PC-3 (cell line): ENCODE measurements at regions of chr17 and their contacts with region 1.

Region 1: DNA sequence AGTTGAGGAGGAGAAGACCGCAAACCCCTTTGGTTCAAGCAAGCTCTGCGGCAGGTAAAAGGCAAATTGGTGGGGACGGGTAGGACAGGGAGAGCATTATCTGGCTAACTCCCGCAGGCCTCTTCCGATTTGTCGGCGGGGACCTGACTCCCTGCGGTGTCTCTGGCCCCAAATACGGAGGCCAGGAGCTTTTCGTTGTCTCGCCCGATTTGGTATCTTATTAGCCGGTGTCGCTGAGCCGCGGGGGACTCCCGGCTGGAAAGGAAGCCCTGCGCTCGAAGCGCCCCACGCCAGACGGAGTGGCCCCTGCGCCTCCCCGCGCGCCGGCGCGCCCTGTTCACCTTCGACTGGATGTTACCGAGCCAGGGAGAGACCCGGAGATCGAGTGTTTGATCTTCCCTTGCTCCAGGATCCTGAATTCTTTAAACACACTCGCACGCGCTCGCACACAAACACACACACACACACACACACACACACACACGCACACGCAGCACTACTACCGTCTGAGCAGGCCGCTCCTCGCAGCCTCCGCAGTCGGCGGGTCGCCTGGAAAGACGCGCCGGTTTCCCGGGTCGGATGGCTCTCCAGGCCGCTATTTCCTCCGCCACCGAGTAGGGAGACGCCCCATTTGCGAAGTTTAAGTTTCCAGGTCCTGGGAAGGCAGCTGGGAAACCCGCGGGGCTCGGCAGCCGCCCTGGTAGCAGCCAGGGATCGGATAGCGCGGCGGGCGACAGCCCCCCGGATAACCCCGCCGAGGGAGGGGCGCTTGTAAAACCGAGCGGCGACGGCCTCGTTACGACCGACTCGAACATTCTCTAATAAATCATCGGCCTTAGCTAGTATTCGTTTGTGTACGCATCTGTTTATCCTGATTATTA is 3.3 kb downstream of the PRAC1 start:
- DNase-seq: peak; percentile 47
- ATAC-seq: no peak
- H3K4me3 ChIP-seq: peak overlapping the region; percentile 90
- H3K27ac ChIP-seq: peak overlapping the region; percentile 87
- H3K4me1 ChIP-seq: peaks cover 31% of the 10 kb centered on the region
- H3K27me3 ChIP-seq: no peaks in the 10 kb centered on the region
- CTCF ChIP-seq: no peak

Region 2: DNA sequence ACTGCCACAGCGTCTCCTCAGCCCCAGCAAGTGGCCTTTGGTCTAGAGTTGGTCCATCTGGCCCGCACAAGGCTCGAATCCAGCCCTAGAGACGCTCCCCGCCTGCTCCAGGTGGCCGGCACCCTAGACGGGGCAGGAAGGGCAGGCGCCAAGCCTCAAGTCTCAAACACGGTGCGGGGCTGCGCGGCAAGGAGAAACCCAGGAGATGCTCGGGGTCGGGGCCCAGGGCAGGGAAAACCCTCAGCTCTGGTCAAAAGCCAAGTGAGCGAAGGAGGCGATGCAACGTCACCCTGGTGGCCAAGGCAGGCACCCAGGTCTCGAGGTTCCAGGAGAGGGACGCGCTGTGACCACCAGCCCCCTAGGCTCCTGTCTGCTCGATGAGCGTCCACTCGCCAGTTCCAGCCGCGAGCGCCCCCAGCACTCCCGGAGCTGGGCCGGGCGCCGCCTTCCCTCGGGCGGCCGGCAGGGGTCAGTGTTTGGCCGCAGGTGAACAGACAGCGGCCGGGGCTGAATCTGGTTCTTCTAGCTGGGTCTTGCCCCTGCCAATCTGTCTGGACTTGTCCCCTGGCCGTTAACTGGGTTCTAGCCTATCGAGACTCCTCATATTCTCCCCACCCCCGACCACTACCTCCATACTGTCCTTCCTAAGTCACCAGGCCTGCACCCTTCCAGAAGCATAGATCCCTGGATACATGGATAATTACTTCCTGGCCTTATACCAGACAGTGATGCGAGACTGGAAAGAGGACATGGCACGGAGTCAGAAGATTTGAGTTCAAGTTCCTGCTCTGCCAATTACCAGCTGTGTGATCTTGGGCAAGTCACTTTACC is 40.6 kb before region 1 on chr17:
- CTCF ChIA-PET with region 1: interaction called, 58 read pairs
- POLR2A ChIA-PET with region 1: interaction called, 7 read pairs
- intact Hi-C with region 1: loop called (anchors 1 kb)
- DNase-seq: peak; percentile 90
- ATAC-seq: peak; percentile 91
- H3K4me3 ChIP-seq: peak overlapping the region; percentile 68
- H3K27ac ChIP-seq: no peak overlapping the region
- H3K4me1 ChIP-seq: peaks cover 11% of the 10 kb centered on the region; the same call in 1 of the 2 replicates
- H3K27me3 ChIP-seq: no peaks in the 10 kb centered on the region
- CTCF ChIP-seq: peak; percentile 100

Region 3: DNA sequence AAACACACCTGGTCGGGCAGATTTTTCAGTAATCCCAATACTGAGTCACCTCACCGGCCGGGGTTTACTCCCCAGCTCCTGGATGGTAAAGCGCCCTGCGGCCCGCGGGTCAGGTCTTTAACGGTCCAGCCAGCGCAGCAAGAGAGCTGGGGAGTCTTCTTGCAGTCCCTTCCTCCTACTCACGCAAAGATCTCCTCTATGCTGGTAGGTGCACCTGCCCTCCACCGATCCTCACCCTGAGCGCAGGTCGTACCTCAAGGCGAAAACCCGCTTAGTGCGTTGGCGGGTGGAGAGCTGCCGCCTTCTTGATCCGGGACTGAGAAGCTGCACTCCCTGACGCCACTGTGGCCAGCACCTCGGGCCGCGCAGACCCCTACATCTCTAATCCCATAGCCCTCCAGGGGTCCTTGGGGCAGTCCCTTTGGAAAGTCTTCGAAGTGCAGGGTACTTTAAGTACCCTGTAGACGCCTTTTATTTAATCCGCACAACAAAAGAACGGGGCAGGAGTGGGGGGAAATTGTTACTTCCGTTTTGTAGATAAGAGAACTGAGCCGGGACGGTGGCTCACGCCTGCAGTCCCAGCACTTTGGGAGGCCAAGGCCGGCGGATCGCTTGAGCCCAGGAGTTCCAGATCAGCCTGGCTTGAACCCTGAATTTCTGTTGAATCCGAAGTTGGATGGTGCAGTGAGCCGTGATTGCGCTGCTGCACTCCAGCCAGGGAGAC is 20.0 kb after region 1 on chr17:
- CTCF ChIA-PET with region 1: interaction called, 14 read pairs
- POLR2A ChIA-PET with region 1: interaction called, 10 read pairs
- intact Hi-C with region 1: no loop called
- DNase-seq: peak; percentile 91
- ATAC-seq: peak; percentile 53
- H3K4me3 ChIP-seq: peak overlapping the region; percentile 66
- H3K27ac ChIP-seq: peak overlapping the region; percentile 61
- H3K4me1 ChIP-seq: peaks cover 52% of the 10 kb centered on the region
- H3K27me3 ChIP-seq: no peaks in the 10 kb centered on the region
- CTCF ChIP-seq: no peak

Region 4: GRCh38 chr17:48860034-48860433 is 141.0 kb after region 1 on chr17:
- CTCF ChIA-PET with region 1: no interaction called
- POLR2A ChIA-PET with region 1: no interaction called
- intact Hi-C with region 1: no loop called
- DNase-seq: no peak
- ATAC-seq: no peak
- H3K4me3 ChIP-seq: no peak overlapping the region
- H3K27ac ChIP-seq: no peak overlapping the region
- H3K4me1 ChIP-seq: no peaks in the 10 kb centered on the region
- H3K27me3 ChIP-seq: no peaks in the 10 kb centered on the region
- CTCF ChIP-seq: peak; percentile 43; the same call in 1 of the 2 replicates